ENCODE measurements at regions of chr1 and their contacts with region 1.

Region 1: DNA sequence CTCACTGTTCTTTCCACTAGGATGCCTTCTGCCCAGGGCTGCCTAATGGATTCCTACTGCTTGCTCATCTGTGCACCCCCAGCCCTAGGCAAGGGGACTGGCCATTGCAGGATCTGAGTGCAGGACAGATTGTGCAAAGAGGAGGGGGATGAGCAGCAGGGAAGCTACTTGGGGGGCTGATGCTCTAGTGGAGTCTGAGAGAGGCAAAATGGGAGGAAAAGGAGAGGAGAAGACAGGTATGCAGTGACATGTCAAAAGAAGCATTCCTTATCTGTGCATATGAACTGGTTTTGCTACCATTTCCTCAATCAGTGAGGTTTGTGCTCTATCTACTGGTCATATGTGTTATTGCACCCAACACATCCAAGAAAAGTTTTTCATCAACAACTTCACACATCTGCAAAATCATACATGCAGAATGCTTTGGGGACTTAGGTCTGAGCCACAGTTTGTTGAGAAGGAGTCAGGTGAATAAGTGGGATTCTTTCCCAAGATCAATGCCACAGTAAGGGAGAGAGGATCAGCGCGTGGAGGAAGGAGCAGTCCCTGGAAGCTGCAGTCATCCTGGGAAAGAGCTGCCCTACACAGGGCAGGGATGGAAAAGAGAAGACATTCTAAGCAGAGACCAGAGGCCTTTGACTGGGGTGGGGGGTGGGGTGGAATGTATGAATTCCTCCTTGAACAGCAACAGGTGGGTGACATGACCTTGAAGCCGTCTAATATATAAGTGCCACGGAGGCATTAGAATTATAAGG is 14.4 kb downstream of the SLC5A9 start:
- DNase-seq: no peak
- H3K4me3 ChIP-seq: no peak overlapping the region
- H3K27ac ChIP-seq: no peak overlapping the region
- H3K4me1 ChIP-seq: no peaks in the 10 kb centered on the region
- H3K27me3 ChIP-seq: peaks cover 16% of the 10 kb centered on the region; the same call in 1 of the 2 replicates
- CTCF ChIP-seq: peak; percentile 71

Region 2: GRCh38 chr1:47527658-47528255 is 709.1 kb before region 1 on chr1:
- CTCF ChIA-PET with region 1: no interaction called
- POLR2A ChIA-PET with region 1: no interaction called
- intact Hi-C with region 1: no loop called
- DNase-seq: peak in 1 of 2 experiments; percentile 16
- H3K4me3 ChIP-seq: no peak overlapping the region
- H3K27ac ChIP-seq: no peak overlapping the region
- H3K4me1 ChIP-seq: no peaks in the 10 kb centered on the region
- H3K27me3 ChIP-seq: no peaks in the 10 kb centered on the region
- CTCF ChIP-seq: peak; percentile 74

Region 3: DNA sequence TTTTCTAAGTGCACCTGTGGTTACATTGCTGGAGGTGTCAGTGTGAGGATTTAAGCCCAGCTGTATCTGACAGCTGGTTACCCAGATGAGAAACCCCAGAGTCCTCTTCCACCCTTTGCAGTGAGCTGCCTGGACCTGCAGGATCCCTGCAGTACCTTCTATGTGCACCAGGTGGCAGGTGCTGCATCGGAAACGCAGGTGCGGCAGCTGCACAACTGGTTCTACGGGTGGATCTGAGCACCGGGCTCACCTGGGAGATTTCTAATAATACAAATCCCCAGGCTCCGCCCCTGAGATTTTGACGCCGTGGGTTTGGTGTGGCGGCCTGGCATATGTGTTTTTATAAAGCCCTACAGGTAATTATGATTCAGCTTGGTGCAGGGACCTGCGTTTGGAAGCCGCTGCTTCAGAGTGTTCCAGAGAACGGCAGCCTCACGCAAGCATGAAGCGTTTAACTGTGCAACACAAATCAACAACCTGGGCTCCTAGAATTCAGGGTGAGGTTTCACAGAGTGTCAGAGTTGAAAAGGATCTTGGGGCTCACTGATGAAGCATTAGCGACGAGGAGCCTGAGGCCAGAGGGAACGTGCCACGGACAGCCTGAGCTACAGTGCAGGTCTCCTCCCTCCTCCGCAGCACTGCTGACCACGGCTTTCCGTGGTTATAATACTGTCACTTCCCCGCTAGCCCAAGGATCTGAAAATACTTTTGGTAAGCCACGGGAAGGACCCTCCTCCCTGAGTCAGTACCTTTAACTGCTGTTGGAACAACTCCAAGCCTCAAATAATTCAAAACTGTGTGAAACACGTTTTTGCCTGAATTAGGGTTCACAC is 143.0 kb before region 1 on chr1:
- CTCF ChIA-PET with region 1: no interaction called
- POLR2A ChIA-PET with region 1: no interaction called
- intact Hi-C with region 1: loop called (anchors 10 kb)
- DNase-seq: peak; percentile 65 to 76
- H3K4me3 ChIP-seq: no peak overlapping the region
- H3K27ac ChIP-seq: no peak overlapping the region
- H3K4me1 ChIP-seq: no peaks in the 10 kb centered on the region
- H3K27me3 ChIP-seq: peaks cover 18% of the 10 kb centered on the region
- CTCF ChIP-seq: peak; percentile 88

Region 4: DNA sequence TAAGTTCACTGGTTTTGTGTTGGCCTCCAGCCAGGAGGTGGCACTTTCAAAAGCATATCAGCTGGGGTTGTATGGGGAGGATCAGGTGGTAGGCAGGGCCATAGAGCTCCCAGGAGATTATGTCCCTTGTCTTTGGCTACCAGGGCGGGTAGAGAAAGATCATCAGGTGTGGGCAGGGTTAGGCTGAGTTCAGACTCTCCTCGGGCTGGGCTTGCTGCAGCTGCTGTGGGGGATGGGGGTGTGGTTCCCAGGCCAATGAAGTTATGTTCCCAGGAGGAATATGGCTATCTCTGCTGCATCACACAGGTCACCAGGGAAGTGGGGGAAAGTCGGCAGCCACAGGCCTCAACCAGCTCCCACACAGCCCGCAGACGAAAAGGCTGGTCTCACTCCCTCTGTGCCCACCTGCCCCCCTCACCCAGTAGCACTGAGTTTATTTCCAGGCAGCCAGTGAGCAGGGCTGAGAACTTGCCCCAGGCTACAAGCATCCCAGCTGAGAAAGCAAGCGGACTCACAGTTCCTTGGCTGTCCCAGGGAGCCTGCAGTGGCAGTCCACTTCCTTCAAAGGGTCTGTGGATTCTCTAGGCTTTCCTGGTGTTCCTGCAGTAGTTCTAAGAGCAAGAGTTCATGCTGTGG is 54.4 kb after region 1 on chr1:
- CTCF ChIA-PET with region 1: no interaction called
- POLR2A ChIA-PET with region 1: no interaction called
- intact Hi-C with region 1: no loop called
- DNase-seq: no peak
- H3K4me3 ChIP-seq: no peak overlapping the region
- H3K27ac ChIP-seq: no peak overlapping the region
- H3K4me1 ChIP-seq: no peaks in the 10 kb centered on the region
- H3K27me3 ChIP-seq: no peaks in the 10 kb centered on the region
- CTCF ChIP-seq: no peak

Region 5: DNA sequence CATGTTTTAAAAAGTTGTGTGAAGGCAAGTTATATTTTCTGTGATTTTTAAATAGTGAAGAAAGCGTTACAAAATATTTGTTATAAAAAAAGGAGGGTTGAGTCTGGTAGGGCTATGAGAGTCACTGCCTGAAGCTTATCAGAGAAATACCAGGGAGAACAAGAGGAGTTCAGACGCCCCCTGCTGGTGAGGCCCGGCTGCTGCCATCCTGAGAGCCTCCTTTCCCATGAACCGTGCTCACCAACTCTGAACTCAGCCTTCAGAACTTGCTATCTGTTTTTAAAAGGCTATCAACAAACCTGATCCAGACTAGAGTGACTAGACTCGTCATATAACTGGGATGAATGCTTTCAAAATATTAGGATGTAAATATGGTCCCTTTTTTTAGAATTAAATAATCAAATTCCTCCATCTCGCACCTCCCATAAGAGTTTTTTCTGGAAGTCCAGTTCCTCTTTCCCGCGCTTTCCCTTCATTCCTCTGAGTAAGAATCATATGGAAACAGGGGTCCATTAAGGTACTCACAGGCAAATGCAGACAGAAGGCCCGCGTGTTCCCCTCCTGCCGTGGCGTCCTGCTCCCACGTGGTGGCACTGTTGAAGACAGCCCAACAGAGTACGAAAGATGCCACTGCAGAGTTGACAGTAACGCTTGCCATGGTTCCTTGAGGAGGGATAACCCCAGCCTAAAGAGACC is 261.4 kb after region 1 on chr1:
- CTCF ChIA-PET with region 1: no interaction called
- POLR2A ChIA-PET with region 1: no interaction called
- intact Hi-C with region 1: loop called (anchors 5 kb)
- DNase-seq: peak in 1 of 2 experiments; percentile 51
- H3K4me3 ChIP-seq: no peak overlapping the region
- H3K27ac ChIP-seq: no peak overlapping the region
- H3K4me1 ChIP-seq: no peaks in the 10 kb centered on the region
- H3K27me3 ChIP-seq: 0 out of 2 replicates have a peak, but pooled peaks cover 10% of the 10 kb centered on the region
- CTCF ChIP-seq: peak; percentile 88

Measured in PC-9 (cell line).